ENCODE measurements at regions of chr2 and their contacts with region 1.

Region 1: GRCh38 chr2:222561817-222562645 is 93.9 kb downstream of the FARSB start:
- DNase-seq: peak; percentile 38
- H3K4me3 ChIP-seq: no peak overlapping the region
- H3K27ac ChIP-seq: no peak overlapping the region
- H3K4me1 ChIP-seq: no peaks in the 10 kb centered on the region
- CTCF ChIP-seq: peak; percentile 77

Region 2: DNA sequence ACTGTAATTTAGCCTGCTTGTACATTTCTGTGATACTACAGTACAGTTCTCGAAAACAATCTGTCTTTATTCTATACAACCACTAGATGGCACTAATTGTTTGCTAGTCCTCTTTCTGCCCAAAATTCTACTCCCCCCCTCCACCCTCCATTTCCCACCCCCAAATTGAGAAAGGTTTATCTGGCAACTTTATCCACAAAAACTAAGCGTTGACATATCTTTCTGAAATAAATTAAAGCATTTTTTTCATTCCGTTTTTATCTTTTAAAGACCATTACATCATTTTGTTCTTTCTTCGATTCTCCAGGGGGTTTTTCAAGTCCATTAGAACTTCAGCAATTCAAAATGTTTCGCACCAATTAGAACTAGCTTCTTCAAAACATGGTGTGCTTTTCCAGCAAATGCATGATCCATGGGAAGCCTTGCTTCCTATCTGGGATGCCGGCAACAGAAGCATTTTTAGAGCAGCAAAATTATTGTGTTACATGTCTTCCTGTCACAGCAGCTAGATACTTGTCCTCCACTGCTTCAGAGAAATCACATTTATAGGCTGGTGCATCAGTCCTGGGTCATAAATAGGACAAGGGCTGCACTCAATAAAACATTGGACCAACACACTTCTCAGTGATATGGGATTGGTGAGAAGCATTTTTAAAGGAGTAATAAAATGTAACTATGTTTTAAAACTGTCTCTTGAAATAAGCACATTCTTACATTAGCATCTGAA is 504.5 kb before region 1 on chr2:
- CTCF ChIA-PET with region 1: no interaction called
- POLR2A ChIA-PET with region 1: no interaction called
- intact Hi-C with region 1: loop called (anchors 5 kb)
- DNase-seq: peak; percentile 21
- H3K4me3 ChIP-seq: no peak overlapping the region
- H3K27ac ChIP-seq: no peak overlapping the region
- H3K4me1 ChIP-seq: no peaks in the 10 kb centered on the region
- CTCF ChIP-seq: peak; percentile 85

Region 3: DNA sequence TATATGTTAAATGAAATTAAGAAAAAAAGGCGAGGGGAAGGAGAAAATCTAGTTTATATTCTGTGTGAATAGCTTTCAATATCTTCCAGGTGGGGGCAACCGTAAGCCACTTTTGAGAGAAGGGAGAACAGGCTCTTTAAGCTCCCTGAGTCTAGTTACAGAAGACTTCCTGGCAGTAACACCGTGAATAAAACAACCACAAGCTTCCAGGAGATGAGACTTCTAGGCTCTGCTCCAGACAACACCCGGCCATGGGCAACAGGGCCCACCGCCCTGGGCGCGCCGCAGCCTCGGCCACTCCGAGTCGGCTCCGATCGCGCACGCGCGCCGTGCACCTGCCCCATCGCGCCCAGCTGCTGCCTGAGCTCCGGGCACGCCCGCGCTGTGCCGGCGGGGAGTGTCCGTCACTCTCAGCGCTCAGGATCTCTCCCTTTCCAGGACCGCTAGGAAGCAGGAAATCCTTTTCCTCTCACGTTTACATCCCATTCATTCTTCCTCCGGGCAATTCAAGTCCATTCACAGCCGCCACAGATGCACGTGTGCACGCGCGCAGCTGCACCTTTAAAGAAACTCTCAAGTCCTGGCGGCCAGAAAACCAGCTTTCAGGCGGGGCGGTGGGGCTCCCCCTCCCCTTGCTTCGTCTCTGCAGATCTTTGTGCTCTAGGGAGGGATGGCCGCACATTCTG is 243.9 kb before region 1 on chr2:
- CTCF ChIA-PET with region 1: no interaction called
- POLR2A ChIA-PET with region 1: no interaction called
- intact Hi-C with region 1: loop called (anchors 5 kb)
- DNase-seq: peak; percentile 36
- H3K4me3 ChIP-seq: peak overlapping the region; percentile 65
- H3K27ac ChIP-seq: no peak overlapping the region
- H3K4me1 ChIP-seq: no peaks in the 10 kb centered on the region
- CTCF ChIP-seq: peak; percentile 74

Region 4: GRCh38 chr2:222341331-222341730 is 220.7 kb before region 1 on chr2:
- CTCF ChIA-PET with region 1: no interaction called
- POLR2A ChIA-PET with region 1: no interaction called
- intact Hi-C with region 1: no loop called
- DNase-seq: no peak
- H3K4me3 ChIP-seq: no peak overlapping the region
- H3K27ac ChIP-seq: no peak overlapping the region
- H3K4me1 ChIP-seq: no peaks in the 10 kb centered on the region
- CTCF ChIP-seq: no peak

Region 5: DNA sequence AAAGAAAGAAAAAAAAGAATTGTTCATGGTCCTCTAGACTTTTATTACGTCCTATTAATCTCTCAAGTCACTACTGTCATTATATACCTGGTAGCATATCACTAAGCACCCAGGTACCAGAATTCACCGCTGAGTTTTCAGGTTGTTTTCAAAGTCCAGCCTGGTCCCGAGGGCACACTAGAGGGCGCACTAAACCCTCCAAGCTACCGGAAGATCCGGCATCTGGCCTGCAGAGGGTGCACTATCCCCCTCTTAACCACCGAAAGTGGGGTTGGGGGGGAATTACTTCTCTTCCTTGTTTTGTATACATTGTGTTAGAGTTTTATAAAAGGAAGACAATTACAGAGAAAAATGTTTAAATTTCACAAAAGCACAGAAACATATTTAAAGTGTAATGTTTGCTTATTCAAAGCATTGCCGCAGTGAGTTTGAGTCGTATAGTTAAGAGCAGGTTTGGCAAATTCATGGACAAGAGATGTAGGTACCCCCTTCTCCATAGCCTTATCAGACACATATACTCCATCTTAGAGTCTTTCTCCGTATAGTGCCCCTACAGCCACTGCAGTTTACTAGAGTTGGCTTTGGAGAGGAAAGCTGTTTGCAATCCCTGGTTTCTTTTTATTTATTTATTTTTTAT is 128.7 kb after region 1 on chr2:
- CTCF ChIA-PET with region 1: no interaction called
- POLR2A ChIA-PET with region 1: no interaction called
- intact Hi-C with region 1: no loop called
- DNase-seq: peak; percentile 89
- H3K4me3 ChIP-seq: no peak overlapping the region
- H3K27ac ChIP-seq: no peak overlapping the region
- H3K4me1 ChIP-seq: no peaks in the 10 kb centered on the region
- CTCF ChIP-seq: peak; percentile 100

Region 6: GRCh38 chr2:222813177-222813843 is 251.3 kb after region 1 on chr2:
- CTCF ChIA-PET with region 1: no interaction called
- POLR2A ChIA-PET with region 1: no interaction called
- intact Hi-C with region 1: no loop called
- DNase-seq: no peak
- H3K4me3 ChIP-seq: no peak overlapping the region
- H3K27ac ChIP-seq: no peak overlapping the region
- H3K4me1 ChIP-seq: no peaks in the 10 kb centered on the region
- CTCF ChIP-seq: no peak

Measured in OCI-LY7 (cell line).